Ovary (tissue), 10 donors: ENCODE measurements at regions of chr3 and their contacts with region 1.

Region 1: GRCh38 chr3:139241783-139242182 is 102.0 kb upstream of the MRPS22 start:
- DNase-seq: no peak
- H3K4me3 ChIP-seq: no peak overlapping the region
- H3K27ac ChIP-seq: peak overlapping the region in 1 of 2 donors; percentile 52
- H3K4me1 ChIP-seq: peaks cover 9% of the 10 kb centered on the region
- H3K27me3 ChIP-seq: no peaks in the 10 kb centered on the region
- CTCF ChIP-seq: peak; percentile 11 to 46 (median 17)
- EP300 ChIP-seq: no peak
- POLR2A ChIP-seq: no peak

Region 2: GRCh38 chr3:138946181-138947059 is 295.4 kb before region 1 on chr3:
- intact Hi-C with region 1: loop called in 2 of 4 experiments (anchors 2 to 10 kb)
- DNase-seq: peak; percentile 41 to 70 (median 63)
- H3K4me3 ChIP-seq: peak overlapping the region; percentile 75
- H3K27ac ChIP-seq: peak overlapping the region; percentile 94 to 100
- H3K4me1 ChIP-seq: peaks cover 9% of the 10 kb centered on the region
- H3K27me3 ChIP-seq: no peaks in the 10 kb centered on the region
- CTCF ChIP-seq: peak in 2 of 3 donors; percentile 5 to 7
- EP300 ChIP-seq: no peak
- POLR2A ChIP-seq: no peak

Region 3: GRCh38 chr3:139378587-139379241 is 136.9 kb after region 1 on chr3:
- intact Hi-C with region 1: no loop called
- DNase-seq: no peak
- H3K4me3 ChIP-seq: no peak overlapping the region
- H3K27ac ChIP-seq: no peak overlapping the region
- H3K4me1 ChIP-seq: no peaks in the 10 kb centered on the region
- H3K27me3 ChIP-seq: no peaks in the 10 kb centered on the region
- CTCF ChIP-seq: no peak
- EP300 ChIP-seq: no peak
- POLR2A ChIP-seq: no peak